CD8-positive, alpha-beta T cell (primary cell): ENCODE measurements at regions of chr19 and their contacts with region 1.

Region 1: DNA sequence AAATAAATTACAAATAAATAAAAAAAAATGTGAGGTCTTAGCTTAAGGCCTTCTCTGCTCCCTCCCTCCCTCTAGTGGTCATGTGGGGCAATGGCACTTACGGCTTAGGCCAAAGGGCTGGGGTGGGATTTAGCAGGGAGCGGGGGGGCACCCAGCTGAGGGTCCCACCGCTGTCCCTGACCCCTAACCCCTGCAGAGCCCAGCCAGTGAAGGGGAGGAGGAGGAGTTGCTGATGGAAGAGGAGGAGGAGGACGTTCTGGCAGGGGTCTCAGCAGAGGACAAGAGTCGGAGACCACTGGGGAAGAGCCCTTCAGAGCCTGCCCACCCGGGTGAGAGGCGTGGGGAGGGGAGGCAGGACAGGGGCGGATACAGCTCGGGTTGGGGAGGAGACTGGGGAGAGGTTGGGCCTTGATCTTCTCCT is 9.3 kb downstream of the MPND start:
- DNase-seq: peak in 8 of 9 experiments; percentile 41 to 83 (median 69)
- ATAC-seq: peak; percentile 96
- H3K4me3 ChIP-seq: no peak overlapping the region
- H3K4me3 Mint-ChIP-seq: no peak overlapping the region
- H3K27ac ChIP-seq: no peak overlapping the region
- H3K27ac Mint-ChIP-seq: no peak overlapping the region
- H3K4me1 ChIP-seq: no peaks in the 10 kb centered on the region
- H3K4me1 Mint-ChIP-seq: peaks cover 2% of the 10 kb centered on the region
- H3K27me3 ChIP-seq: no peaks in the 10 kb centered on the region
- H3K27me3 Mint-ChIP-seq: no peaks in the 10 kb centered on the region
- CTCF ChIP-seq: peak; percentile 87

Region 2: DNA sequence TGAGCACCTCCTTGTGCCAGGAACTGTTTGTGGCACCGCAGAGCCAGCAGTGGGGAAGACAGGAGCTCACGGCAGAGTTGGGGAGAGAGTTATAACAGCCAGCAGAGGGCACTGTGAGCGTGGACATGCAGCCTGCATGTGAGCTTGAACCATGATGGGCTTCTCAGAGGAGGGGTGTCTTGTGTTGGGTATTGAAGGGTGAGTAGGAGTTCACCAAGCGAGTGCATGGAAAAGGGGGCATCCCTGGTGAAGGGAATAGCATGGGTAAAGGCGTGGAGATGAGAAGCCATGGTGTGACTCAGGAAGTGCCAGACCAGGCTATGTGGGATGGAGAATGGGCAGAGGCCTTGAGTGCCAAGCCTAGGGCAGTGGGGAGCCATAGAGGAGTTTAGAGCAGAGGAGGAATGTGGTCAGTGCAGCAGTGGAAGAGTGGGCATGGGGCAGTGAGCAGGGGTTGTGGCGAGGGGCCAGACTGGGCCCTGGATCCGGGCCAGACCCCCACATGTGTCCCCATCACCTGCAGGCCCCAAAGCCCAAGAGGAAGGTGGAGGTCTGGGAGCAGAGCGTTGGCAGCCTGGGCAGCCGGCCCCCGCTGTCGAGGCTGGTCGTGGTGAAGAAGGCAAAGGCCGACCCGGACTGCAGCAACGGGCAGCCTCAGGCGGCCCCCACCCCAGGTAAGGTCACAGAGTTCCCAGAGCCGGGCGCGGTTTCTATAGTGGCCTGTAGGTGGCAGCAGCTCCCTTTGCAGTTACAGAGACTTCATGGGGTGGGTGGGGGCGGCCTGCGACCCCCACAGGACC is 85.4 kb before region 1 on chr19:
- CTCF ChIA-PET with region 1: interaction called, 88 read pairs
- POLR2A ChIA-PET with region 1: interaction called, 4 read pairs
- intact Hi-C with region 1: loop called in 1 of 2 experiments (anchors 1 kb)
- DNase-seq: peak; percentile 37 to 76 (median 65)
- ATAC-seq: peak; percentile 70
- H3K4me3 ChIP-seq: no peak overlapping the region
- H3K4me3 Mint-ChIP-seq: no peak overlapping the region
- H3K27ac ChIP-seq: no peak overlapping the region
- H3K27ac Mint-ChIP-seq: peak overlapping the region; percentile 23
- H3K4me1 ChIP-seq: peaks cover 15% of the 10 kb centered on the region
- H3K4me1 Mint-ChIP-seq: peaks cover 25% of the 10 kb centered on the region
- H3K27me3 ChIP-seq: no peaks in the 10 kb centered on the region
- H3K27me3 Mint-ChIP-seq: no peaks in the 10 kb centered on the region
- CTCF ChIP-seq: peak; percentile 82

Region 3: GRCh38 chr19:4272894-4273293 is 79.8 kb before region 1 on chr19:
- CTCF ChIA-PET with region 1: interaction called, 88 read pairs
- POLR2A ChIA-PET with region 1: interaction called, 4 read pairs
- intact Hi-C with region 1: no loop called
- DNase-seq: no peak
- ATAC-seq: no peak
- H3K4me3 ChIP-seq: no peak overlapping the region
- H3K4me3 Mint-ChIP-seq: no peak overlapping the region
- H3K27ac ChIP-seq: no peak overlapping the region
- H3K27ac Mint-ChIP-seq: no peak overlapping the region
- H3K4me1 ChIP-seq: no peaks in the 10 kb centered on the region
- H3K4me1 Mint-ChIP-seq: no peaks in the 10 kb centered on the region
- H3K27me3 ChIP-seq: no peaks in the 10 kb centered on the region
- H3K27me3 Mint-ChIP-seq: no peaks in the 10 kb centered on the region
- CTCF ChIP-seq: no peak

Region 4: GRCh38 chr19:4295972-4296771 is 56.5 kb before region 1 on chr19:
- CTCF ChIA-PET with region 1: interaction called, 22 read pairs
- POLR2A ChIA-PET with region 1: no interaction called
- intact Hi-C with region 1: no loop called
- DNase-seq: no peak
- ATAC-seq: no peak
- H3K4me3 ChIP-seq: no peak overlapping the region
- H3K4me3 Mint-ChIP-seq: no peak overlapping the region
- H3K27ac ChIP-seq: no peak overlapping the region
- H3K27ac Mint-ChIP-seq: peak overlapping the region; percentile 81
- H3K4me1 ChIP-seq: peaks cover 4% of the 10 kb centered on the region
- H3K4me1 Mint-ChIP-seq: peaks cover 12% of the 10 kb centered on the region
- H3K27me3 ChIP-seq: no peaks in the 10 kb centered on the region
- H3K27me3 Mint-ChIP-seq: no peaks in the 10 kb centered on the region
- CTCF ChIP-seq: no peak

Region 5: DNA sequence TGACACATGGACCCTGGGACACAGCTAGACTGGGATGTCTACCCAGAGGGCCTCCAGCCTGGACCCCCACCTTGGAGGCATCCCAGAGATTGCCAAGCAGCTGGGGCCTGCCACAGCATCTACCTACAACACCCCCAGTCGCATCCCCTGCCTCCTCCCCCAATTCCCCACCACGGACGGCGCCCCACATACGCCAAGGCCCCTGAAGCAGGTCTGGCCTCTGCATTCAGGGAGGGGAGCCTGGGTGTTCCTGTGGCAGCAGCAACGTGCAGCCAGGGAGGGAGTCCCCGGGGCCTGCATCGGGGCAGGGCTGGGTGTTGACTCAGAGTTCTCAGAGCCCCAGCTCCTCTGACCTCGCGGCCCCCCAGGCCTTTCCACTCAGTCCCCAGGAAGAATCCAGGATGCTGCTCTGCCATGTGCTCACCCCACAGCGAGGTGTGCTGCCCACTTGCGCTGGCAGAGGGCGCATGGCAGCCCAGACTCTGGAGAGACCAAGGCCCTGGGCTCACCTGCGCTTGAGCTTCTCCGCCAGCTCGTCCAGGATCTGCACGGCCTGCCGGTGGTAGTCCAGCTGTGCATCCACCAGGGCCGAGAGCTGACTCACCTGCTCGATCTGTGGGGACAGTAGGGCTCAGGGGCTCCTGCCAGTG is 10.3 kb after region 1 on chr19:
- CTCF ChIA-PET with region 1: interaction called, 14 read pairs
- POLR2A ChIA-PET with region 1: no interaction called
- intact Hi-C with region 1: no loop called
- DNase-seq: peak in 1 of 9 experiments; percentile 28
- ATAC-seq: peak; percentile 23
- H3K4me3 ChIP-seq: no peak overlapping the region
- H3K4me3 Mint-ChIP-seq: no peak overlapping the region
- H3K27ac ChIP-seq: no peak overlapping the region
- H3K27ac Mint-ChIP-seq: no peak overlapping the region
- H3K4me1 ChIP-seq: peaks cover under 1% of the 10 kb centered on the region
- H3K4me1 Mint-ChIP-seq: peaks cover 2% of the 10 kb centered on the region
- H3K27me3 ChIP-seq: no peaks in the 10 kb centered on the region
- H3K27me3 Mint-ChIP-seq: no peaks in the 10 kb centered on the region
- CTCF ChIP-seq: no peak

Region 6: DNA sequence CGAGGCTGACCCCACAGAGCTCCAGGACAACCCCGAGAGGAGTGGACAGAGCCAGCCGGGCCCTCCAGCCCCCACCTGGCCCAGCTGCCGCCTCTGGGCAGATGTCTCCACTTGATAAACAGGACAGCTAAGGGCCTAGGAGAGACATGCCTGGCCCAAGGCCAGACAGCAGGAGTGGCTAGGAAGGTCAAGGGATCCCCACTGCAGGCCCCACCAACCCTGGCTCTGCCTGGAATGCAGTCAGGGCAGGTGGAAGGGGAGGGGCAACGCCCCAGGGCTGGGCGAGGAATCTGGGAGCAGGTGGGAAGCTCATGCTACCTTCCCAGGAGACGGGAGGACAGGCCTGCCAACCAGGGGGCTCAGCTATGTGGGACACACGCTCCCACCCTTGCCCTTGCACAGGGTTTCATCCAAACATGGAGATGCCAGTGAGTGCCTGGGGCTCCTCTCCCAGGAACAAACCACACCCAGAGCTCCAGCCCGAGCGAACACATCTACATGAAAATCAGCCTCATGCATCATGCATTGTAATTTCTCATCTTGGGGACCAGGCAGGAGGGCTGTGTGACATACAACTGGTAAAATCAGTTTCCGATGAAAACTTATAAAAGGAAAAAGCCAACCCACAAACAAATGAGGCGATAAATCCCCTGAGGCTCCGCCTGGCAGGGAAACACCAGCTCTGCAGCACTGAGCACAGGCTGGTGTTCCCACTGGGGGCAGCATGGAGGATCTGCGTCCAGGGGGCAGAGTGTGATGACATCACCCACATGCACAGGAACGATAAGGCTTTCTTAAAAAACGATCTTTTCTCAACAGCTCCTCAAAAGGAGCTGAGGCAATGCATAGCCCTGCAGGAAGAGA is 22.7 kb after region 1 on chr19:
- CTCF ChIA-PET with region 1: interaction called, 10 read pairs
- POLR2A ChIA-PET with region 1: no interaction called
- intact Hi-C with region 1: no loop called
- DNase-seq: no peak
- ATAC-seq: no peak
- H3K4me3 ChIP-seq: no peak overlapping the region
- H3K4me3 Mint-ChIP-seq: no peak overlapping the region
- H3K27ac ChIP-seq: no peak overlapping the region
- H3K27ac Mint-ChIP-seq: no peak overlapping the region
- H3K4me1 ChIP-seq: peaks cover 54% of the 10 kb centered on the region
- H3K4me1 Mint-ChIP-seq: peaks cover 52% of the 10 kb centered on the region
- H3K27me3 ChIP-seq: no peaks in the 10 kb centered on the region
- H3K27me3 Mint-ChIP-seq: no peaks in the 10 kb centered on the region
- CTCF ChIP-seq: no peak

Region 7: DNA sequence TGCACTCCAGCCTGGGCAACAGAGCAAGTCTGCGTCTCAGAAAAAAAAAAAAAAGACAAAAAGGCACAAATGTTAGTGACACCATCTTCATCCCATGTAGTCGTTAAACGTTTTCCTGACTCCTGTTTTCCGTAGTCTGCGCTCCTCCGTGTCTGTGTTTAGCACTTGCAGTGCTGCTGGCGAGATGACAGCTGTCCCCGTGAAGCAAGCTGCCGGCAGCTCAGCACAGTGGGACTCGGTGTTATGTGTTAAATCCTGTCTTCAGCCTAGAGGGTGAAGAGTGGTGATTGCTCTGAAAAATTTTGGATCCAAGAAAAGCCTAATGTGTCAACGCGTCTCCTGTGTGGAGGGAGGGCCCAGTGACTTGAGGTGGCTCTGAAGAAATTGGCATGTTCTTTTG is 86.5 kb after region 1 on chr19:
- CTCF ChIA-PET with region 1: no interaction called
- POLR2A ChIA-PET with region 1: no interaction called
- intact Hi-C with region 1: no loop called
- DNase-seq: no peak
- ATAC-seq: no peak
- H3K4me3 ChIP-seq: no peak overlapping the region
- H3K4me3 Mint-ChIP-seq: no peak overlapping the region
- H3K27ac ChIP-seq: no peak overlapping the region
- H3K27ac Mint-ChIP-seq: no peak overlapping the region
- H3K4me1 ChIP-seq: no peaks in the 10 kb centered on the region
- H3K4me1 Mint-ChIP-seq: no peaks in the 10 kb centered on the region
- H3K27me3 ChIP-seq: no peaks in the 10 kb centered on the region
- H3K27me3 Mint-ChIP-seq: no peaks in the 10 kb centered on the region
- CTCF ChIP-seq: no peak